ENCODE measurements at regions of chr19 and their contacts with region 1.

Region 1: GRCh38 chr19:50511068-50511822 is at the start of gene JOSD2:
- DNase-seq: peak; percentile 94 to 100 (median 96)
- ATAC-seq: peak; percentile 91
- H3K4me3 ChIP-seq: peak within 1 kb of the TSS; percentile 75 to 93
- H3K4me3 Mint-ChIP-seq: peak within 1 kb of the TSS; percentile 91
- H3K27ac ChIP-seq: peak within 1 kb of the TSS; percentile 90 to 92
- H3K27ac Mint-ChIP-seq: peak within 1 kb of the TSS; percentile 99
- H3K4me1 ChIP-seq: peaks cover 16% of the 10 kb centered on the region
- H3K4me1 Mint-ChIP-seq: peaks cover 16% of the 10 kb centered on the region
- H3K27me3 ChIP-seq: no peaks in the 10 kb centered on the region
- H3K27me3 Mint-ChIP-seq: peaks cover 4% of the 10 kb centered on the region
- CTCF ChIP-seq: no peak
- total RNA-seq, gene JOSD2: 8.8 to 9.9 TPM

Region 2: DNA sequence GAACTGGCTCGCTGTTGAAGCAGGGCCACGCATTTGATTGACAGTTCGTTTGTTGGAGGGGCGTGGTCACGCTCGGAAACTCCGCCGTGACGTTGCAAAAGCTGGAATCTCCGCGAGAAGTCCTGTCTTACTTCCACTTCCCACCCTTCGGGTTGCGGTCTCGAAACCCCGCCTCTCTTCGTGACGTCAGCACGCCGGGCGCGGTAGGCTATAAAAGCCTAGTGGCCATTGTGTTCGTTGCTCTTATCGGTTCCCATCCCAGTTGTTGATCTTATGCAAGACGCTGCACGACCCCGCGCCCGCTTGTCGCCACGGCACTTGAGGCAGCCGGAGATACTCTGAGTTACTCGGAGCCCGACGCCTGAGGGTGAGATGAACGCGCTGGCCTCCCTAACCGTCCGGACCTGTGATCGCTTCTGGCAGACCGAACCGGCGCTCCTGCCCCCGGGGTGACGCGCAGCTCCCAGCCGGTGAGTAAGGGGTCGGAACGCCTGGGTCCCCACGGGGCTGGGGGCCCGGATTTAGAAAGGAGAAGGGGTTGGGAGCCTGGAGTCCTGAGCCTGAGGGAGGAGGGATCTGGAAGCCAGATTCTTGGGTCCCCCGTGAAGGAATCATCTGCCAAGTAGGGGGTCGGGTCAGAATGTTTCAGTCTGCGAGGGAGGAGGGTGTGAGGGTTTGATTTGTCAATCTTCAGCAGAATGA is 1638.9 kb before region 1 on chr19 and contains the start of gene PPP1R15A:
- CTCF ChIA-PET with region 1: no interaction called
- POLR2A ChIA-PET with region 1: no interaction called
- intact Hi-C with region 1: loop called in 1 of 2 experiments (anchors 5 kb)
- DNase-seq: peak; percentile 95 to 99 (median 98)
- ATAC-seq: peak; percentile 41
- H3K4me3 ChIP-seq: peak within 1 kb of the TSS; percentile 88 to 90
- H3K4me3 Mint-ChIP-seq: peak within 1 kb of the TSS; percentile 97
- H3K27ac ChIP-seq: peak within 1 kb of the TSS; percentile 98 to 99
- H3K27ac Mint-ChIP-seq: peak within 1 kb of the TSS; percentile 100
- H3K4me1 ChIP-seq: peaks cover 32% of the 10 kb centered on the region
- H3K4me1 Mint-ChIP-seq: peaks cover 34% of the 10 kb centered on the region
- H3K27me3 ChIP-seq: no peaks in the 10 kb centered on the region
- H3K27me3 Mint-ChIP-seq: no peaks in the 10 kb centered on the region
- CTCF ChIP-seq: no peak
- total RNA-seq, gene PPP1R15A: 398 to 399 TPM

Region 3: GRCh38 chr19:50025024-50025789 is 486.0 kb before region 1 on chr19 and contains the start of gene VRK3:
- CTCF ChIA-PET with region 1: no interaction called
- POLR2A ChIA-PET with region 1: no interaction called
- intact Hi-C with region 1: loop called in 1 of 2 experiments (anchors 2 kb)
- DNase-seq: peak; percentile 95 to 100 (median 97)
- ATAC-seq: peak; percentile 86
- H3K4me3 ChIP-seq: peak within 1 kb of the TSS; percentile 88 to 98
- H3K4me3 Mint-ChIP-seq: peak within 1 kb of the TSS; percentile 90
- H3K27ac ChIP-seq: peak within 1 kb of the TSS; percentile 98
- H3K27ac Mint-ChIP-seq: peak within 1 kb of the TSS; percentile 98
- H3K4me1 ChIP-seq: peaks cover 29% of the 10 kb centered on the region
- H3K4me1 Mint-ChIP-seq: peaks cover 53% of the 10 kb centered on the region
- H3K27me3 ChIP-seq: no peaks in the 10 kb centered on the region
- H3K27me3 Mint-ChIP-seq: no peaks in the 10 kb centered on the region
- CTCF ChIP-seq: no peak
- total RNA-seq, gene VRK3: 71.1 to 73.1 TPM

Region 4: DNA sequence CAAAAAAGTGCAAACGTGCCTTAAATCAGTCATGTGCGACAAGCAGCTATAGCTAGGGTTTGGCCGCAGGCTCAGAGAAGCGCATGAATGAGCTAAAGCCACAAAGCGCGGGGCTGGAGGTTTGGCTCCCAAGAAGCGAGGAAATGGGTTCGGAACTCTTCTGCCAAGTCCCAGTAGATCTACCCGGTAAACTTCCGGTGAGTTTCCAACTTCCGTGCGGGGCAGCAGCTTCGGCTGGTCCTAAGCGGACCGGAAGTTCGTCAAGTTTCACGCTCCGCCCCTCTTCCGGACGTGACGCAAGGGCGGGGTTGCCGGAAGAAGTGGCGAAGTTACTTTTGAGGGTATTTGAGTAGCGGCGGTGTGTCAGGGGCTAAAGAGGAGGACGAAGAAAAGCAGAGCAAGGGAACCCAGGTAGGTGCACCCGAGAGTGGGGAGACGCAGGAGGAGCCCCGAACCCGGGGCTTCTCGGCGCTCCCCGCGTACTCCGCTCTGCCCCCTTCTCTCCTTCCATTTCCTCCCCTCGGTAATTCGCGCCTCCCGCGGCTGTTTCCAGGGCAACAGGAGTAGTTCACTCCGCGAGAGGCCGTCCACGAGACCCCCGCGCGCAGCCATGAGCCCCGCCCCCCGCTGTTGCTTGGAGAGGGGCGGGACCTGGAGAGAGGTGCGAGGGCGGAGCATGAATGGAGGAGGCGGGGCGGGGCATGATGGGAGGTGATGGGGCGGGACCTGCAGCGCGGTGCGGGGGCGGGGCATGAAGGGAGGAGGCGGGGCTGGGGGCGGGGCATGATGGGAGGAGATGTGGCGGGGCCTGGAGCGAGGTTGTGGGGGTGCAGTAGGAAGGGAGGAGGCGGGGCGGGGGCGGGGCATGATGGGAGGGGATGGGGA is 134.8 kb before region 1 on chr19 and contains the start of gene NR1H2:
- CTCF ChIA-PET with region 1: no interaction called
- POLR2A ChIA-PET with region 1: interaction called, 5 read pairs
- intact Hi-C with region 1: loop called (anchors 1 kb)
- DNase-seq: peak; percentile 89 to 99 (median 95)
- ATAC-seq: peak; percentile 90
- H3K4me3 ChIP-seq: peak within 1 kb of the TSS; percentile 73 to 93
- H3K4me3 Mint-ChIP-seq: peak within 1 kb of the TSS; percentile 99
- H3K27ac ChIP-seq: peak within 1 kb of the TSS; percentile 99 to 100
- H3K27ac Mint-ChIP-seq: peak within 1 kb of the TSS; percentile 100
- H3K4me1 ChIP-seq: peaks cover 11% of the 10 kb centered on the region
- H3K4me1 Mint-ChIP-seq: peaks cover 22% of the 10 kb centered on the region
- H3K27me3 ChIP-seq: no peaks in the 10 kb centered on the region
- H3K27me3 Mint-ChIP-seq: no peaks in the 10 kb centered on the region
- CTCF ChIP-seq: no peak
- total RNA-seq, gene NR1H2: 320 to 327 TPM

Region 5: DNA sequence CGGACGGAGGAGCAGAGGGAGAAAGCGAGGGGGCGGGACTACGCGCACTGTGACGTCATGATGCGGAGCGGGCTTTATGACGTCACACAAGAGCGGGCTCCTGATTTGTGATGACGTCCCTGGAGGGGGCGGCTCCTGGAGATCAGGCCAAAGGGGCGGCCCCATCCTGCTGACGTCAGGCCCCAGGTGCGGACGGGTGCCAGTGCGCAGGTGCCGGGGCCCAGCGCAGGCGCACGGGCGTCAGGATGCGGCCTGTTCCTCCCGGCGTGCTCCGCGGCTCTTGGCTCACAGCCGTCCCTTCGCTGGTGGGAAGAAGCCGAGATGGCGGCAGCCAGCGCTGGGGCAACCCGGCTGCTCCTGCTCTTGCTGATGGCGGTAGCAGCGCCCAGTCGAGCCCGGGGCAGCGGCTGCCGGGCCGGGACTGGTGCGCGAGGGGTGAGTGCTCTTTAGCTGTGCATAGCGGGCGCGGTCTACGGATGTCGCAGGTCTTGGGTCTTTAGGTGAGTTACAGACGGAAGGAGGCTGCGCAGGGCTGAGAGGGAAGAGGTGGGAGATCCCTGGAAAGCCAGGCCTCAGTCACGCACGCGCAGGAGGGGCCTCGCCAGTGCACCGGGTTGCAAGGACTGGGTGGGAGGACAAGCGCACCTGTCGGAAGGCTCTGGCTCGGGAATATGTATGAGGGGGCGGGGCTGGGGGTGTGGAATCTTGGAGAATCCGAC is 34.9 kb before region 1 on chr19 and contains the starts of genes EMC10 and GARIN5A:
- CTCF ChIA-PET with region 1: no interaction called
- POLR2A ChIA-PET with region 1: interaction called, 10 read pairs
- intact Hi-C with region 1: loop called (anchors 1 kb)
- DNase-seq: peak; percentile 77 to 98 (median 91)
- ATAC-seq: peak; percentile 96
- H3K4me3 ChIP-seq: peak within 1 kb of the TSS; percentile 97 to 99
- H3K4me3 Mint-ChIP-seq: peak within 1 kb of the TSS; percentile 97
- H3K27ac ChIP-seq: peak within 1 kb of the TSS; percentile 91 to 94
- H3K27ac Mint-ChIP-seq: peak within 1 kb of the TSS; percentile 95
- H3K4me1 ChIP-seq: peaks cover 24% of the 10 kb centered on the region
- H3K4me1 Mint-ChIP-seq: peaks cover 22% of the 10 kb centered on the region
- H3K27me3 ChIP-seq: no peaks in the 10 kb centered on the region
- H3K27me3 Mint-ChIP-seq: no peaks in the 10 kb centered on the region
- CTCF ChIP-seq: no peak
- total RNA-seq, gene EMC10: 96.7 to 104 TPM
- total RNA-seq, gene GARIN5A: 0.33 TPM in 1 of 2 experiments, not detected in the other

Region 6: GRCh38 chr19:51703575-51704515 is 1192.6 kb after region 1 on chr19:
- CTCF ChIA-PET with region 1: no interaction called
- POLR2A ChIA-PET with region 1: no interaction called
- intact Hi-C with region 1: loop called in 1 of 2 experiments (anchors 10 kb)
- DNase-seq: peak; percentile 91 to 99 (median 97)
- ATAC-seq: peak; percentile 91
- H3K4me3 ChIP-seq: peak overlapping the region; percentile 89 to 98
- H3K4me3 Mint-ChIP-seq: peak overlapping the region; percentile 89
- H3K27ac ChIP-seq: peak overlapping the region; percentile 88 to 92
- H3K27ac Mint-ChIP-seq: peak overlapping the region; percentile 89
- H3K4me1 ChIP-seq: peaks cover 25% of the 10 kb centered on the region
- H3K4me1 Mint-ChIP-seq: peaks cover 35% of the 10 kb centered on the region
- H3K27me3 ChIP-seq: no peaks in the 10 kb centered on the region
- H3K27me3 Mint-ChIP-seq: no peaks in the 10 kb centered on the region
- CTCF ChIP-seq: peak; percentile 56

Measured in CD8-positive, alpha-beta T cell (primary cell).